ENCODE measurements at regions of chr21 and their contacts with region 1.

Region 1: DNA sequence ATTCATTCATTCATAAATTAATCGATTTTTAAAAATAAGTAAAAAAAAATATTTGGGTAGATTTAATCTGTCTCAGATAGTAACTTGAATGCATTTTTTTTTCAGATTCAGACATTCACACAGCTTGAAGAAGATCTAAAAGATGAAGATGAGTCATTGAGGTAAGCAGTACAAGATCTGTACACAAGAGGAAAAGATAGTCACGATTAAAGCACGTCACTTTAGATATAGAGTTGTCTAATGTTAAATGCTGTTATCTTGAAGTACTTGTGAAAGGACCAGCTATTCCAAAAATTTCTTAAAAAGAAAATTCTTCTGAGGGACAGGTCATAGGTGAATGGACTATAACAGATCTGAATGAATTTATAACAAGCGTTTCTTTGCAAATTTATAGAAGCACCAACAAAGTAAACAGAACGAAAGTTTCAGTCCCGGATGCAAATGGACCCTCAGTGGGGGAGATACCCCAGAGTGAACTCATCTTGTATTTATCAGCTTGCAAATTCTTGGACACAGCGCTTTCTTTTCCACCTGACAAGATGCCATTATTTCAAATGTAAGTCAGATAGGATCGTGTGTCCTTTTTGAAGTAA is 31.2 kb upstream of the MORC3 start:
- DNase-seq: no peak
- H3K4me3 Mint-ChIP-seq: peak overlapping the region; percentile 3
- H3K27ac Mint-ChIP-seq: peak overlapping the region; percentile 76
- H3K4me1 Mint-ChIP-seq: peaks cover 19% of the 10 kb centered on the region
- H3K27me3 Mint-ChIP-seq: peaks cover 12% of the 10 kb centered on the region

Region 2: GRCh38 chr21:36203617-36203917 is 85.2 kb before region 1 on chr21:
- intact Hi-C with region 1: loop called (anchors 2 kb)
- DNase-seq: no peak
- H3K4me3 Mint-ChIP-seq: no peak overlapping the region
- H3K27ac Mint-ChIP-seq: peak overlapping the region; percentile 49
- H3K4me1 Mint-ChIP-seq: peaks cover 26% of the 10 kb centered on the region
- H3K27me3 Mint-ChIP-seq: peaks cover 2% of the 10 kb centered on the region

Region 3: DNA sequence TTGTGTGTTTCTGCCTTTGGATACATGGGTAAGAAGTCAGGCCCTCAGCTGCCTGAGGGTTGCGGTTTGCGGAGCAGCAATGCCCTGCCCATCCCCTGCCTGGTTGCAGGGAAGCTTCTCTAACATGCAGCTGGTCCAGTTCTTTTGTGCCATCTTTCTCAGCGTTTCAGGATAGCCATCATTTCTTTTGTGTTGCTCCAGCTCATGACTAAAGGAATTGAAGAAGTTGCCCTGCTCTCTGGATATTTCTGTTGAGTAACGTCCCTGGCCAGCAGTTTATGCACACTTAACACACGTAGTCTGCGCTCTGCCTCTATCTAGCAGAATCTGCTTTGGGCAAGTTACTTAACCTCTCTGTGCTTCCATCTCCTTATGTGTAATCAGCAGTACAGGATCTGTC is 70.1 kb before region 1 on chr21:
- intact Hi-C with region 1: no loop called
- DNase-seq: no peak
- H3K4me3 Mint-ChIP-seq: no peak overlapping the region
- H3K27ac Mint-ChIP-seq: no peak overlapping the region
- H3K4me1 Mint-ChIP-seq: no peaks in the 10 kb centered on the region
- H3K27me3 Mint-ChIP-seq: no peaks in the 10 kb centered on the region

Region 4: GRCh38 chr21:36260030-36260787 is 28.5 kb before region 1 on chr21:
- intact Hi-C with region 1: loop called (anchors 2 kb)
- DNase-seq: peak; percentile 31
- H3K4me3 Mint-ChIP-seq: peak overlapping the region; percentile 70
- H3K27ac Mint-ChIP-seq: peak overlapping the region; percentile 53
- H3K4me1 Mint-ChIP-seq: peaks cover 19% of the 10 kb centered on the region
- H3K27me3 Mint-ChIP-seq: no peaks in the 10 kb centered on the region

Region 5: DNA sequence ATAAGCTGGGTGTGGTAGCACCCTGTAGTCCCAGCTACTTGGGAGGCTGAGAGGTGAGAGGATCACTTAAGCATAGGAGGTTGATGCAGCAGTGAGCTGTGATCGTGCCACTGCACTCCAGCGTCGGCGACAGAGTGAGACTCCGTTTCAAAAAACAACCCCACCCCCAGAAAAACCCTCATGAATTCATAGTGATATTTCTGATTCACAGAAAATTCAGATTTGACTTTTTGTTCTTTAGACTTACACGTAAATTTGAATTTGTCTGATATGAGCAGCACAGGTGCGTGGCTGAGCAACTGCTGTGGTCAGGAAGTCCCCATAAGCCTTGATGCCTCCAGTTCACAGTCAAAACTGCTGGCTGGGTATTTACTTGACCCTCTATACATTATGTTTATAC is 21.3 kb after region 1 on chr21:
- intact Hi-C with region 1: loop called (anchors 1 kb)
- DNase-seq: no peak
- H3K4me3 Mint-ChIP-seq: no peak overlapping the region
- H3K27ac Mint-ChIP-seq: peak overlapping the region; percentile 29
- H3K4me1 Mint-ChIP-seq: peaks cover 6% of the 10 kb centered on the region
- H3K27me3 Mint-ChIP-seq: peaks cover 6% of the 10 kb centered on the region

Region 6: DNA sequence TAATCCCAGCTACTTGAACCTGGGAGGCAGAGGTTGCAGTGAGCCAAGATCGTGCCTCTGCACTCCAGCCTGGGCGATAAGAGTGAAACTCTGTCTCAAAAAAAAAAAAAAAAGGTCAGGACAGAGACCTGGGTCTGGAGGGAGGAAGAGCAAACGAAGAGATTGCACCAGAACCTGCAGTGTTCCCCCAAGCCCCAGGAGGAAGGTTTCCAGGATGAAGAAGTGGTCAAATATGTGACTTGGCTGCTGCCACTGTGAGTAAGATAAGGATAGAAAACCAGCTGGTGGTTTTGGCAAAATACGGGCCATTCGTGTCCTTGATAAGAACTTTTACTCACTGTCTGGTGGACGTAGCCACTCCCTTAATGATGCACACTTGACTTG is 149.0 kb after region 1 on chr21:
- intact Hi-C with region 1: no loop called
- DNase-seq: no peak
- H3K4me3 Mint-ChIP-seq: no peak overlapping the region
- H3K27ac Mint-ChIP-seq: no peak overlapping the region
- H3K4me1 Mint-ChIP-seq: peaks cover 9% of the 10 kb centered on the region
- H3K27me3 Mint-ChIP-seq: peaks cover 11% of the 10 kb centered on the region

Measured in activated T-helper 1 cell treated with anti-CD3 and anti-CD28 coated beads, Interleukin-12 subunit alpha, Interleukin-12 subunit beta, Interleukin-2, Interleukin-4 antibody, amounts not matched to agents 30 ng/mL and 10 ng/mL and 1 ng/mL, durations not matched to agents 14 hours and 24 hours and 36 hours (primary cell).